SK-N-SH (cell line): ENCODE measurements at regions of chr4 and their contacts with region 1.

Region 1: DNA sequence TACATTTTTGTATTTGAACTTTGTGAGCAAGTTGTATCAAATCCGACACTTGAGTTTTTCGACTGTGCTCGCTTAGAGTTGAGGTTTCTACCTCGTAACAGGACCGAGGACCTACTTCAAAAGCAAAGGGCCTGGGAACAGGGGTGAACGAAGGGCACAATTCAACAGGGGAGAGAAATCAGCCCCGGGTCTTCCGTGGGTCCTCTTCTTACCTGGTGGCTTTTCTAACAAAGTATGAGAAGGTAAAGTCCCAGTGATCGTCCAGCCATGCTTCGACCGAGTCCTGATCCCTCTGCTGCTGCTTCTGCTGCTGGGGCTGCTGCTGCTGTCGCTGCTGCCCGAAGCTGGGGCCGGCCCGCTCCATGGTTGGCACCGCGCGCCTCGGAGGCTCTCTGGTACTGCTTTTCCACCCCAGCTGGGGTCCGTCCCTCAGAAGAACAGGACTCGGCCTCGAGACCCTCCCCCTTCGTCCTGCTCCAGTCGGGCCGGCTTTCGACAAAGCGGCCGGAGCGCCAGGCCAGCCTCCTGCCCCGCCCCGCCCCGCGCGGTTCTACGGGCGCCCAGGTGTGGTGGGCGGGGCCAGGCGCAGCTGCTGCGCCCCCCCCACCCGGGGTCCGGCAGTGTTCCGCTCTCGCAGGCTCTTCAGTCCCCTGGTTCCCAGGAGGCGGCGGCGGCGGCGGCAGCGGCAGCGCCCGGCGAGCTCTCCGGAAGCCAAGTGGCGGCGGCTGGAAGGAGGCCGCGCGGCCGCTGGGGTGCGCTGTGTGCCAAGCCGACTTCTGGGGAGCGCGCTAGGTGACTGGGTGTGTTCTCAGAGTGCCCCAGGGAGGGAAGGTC is at the start of gene PDE5A:
- DNase-seq: peak; percentile 85
- H3K4me3 ChIP-seq: peak within 1 kb of the TSS; percentile 82 to 89
- H3K27ac ChIP-seq: peak within 1 kb of the TSS in 1 of 2 experiments; percentile 50; a peak in 3 of 4 replicates
- H3K4me1 ChIP-seq: peaks cover 5 to 7% of the 10 kb centered on the region in 2 experiments; a peak in 3 of 4 replicates
- H3K27me3 ChIP-seq: no peaks in the 10 kb centered on the region
- CTCF ChIP-seq: peak; percentile 88
- EP300 ChIP-seq: no peak
- RAD21 ChIP-seq: peak; percentile 81
- polyA plus RNA-seq, gene PDE5A: 6.4 and 10.1 TPM in 2 replicates

Region 2: GRCh38 chr4:119559044-119559647 is 69.4 kb before region 1 on chr4:
- CTCF ChIA-PET with region 1: interaction called, 68 read pairs
- POLR2A ChIA-PET with region 1: no interaction called
- DNase-seq: peak; percentile 45
- H3K4me3 ChIP-seq: peak overlapping the region in 1 of 2 experiments; percentile 3; a peak in 1 of 4 replicates
- H3K27ac ChIP-seq: no peak overlapping the region
- H3K4me1 ChIP-seq: no peaks in the 10 kb centered on the region; a peak in 1 of 4 replicates
- H3K27me3 ChIP-seq: no peaks in the 10 kb centered on the region
- CTCF ChIP-seq: peak; percentile 75
- EP300 ChIP-seq: no peak
- RAD21 ChIP-seq: peak; percentile 78

Region 3: GRCh38 chr4:119597377-119597776 is 31.1 kb before region 1 on chr4:
- CTCF ChIA-PET with region 1: interaction called, 13 read pairs
- POLR2A ChIA-PET with region 1: no interaction called
- DNase-seq: no peak
- H3K4me3 ChIP-seq: no peak overlapping the region
- H3K27ac ChIP-seq: no peak overlapping the region
- H3K4me1 ChIP-seq: no peaks in the 10 kb centered on the region
- H3K27me3 ChIP-seq: no peaks in the 10 kb centered on the region
- CTCF ChIP-seq: no peak
- EP300 ChIP-seq: no peak
- RAD21 ChIP-seq: no peak

Region 4: GRCh38 chr4:119657111-119657611 is 28.6 kb after region 1 on chr4:
- CTCF ChIA-PET with region 1: interaction called, 34 read pairs
- POLR2A ChIA-PET with region 1: no interaction called
- DNase-seq: no peak
- H3K4me3 ChIP-seq: no peak overlapping the region
- H3K27ac ChIP-seq: no peak overlapping the region
- H3K4me1 ChIP-seq: peaks cover 0 to 9% of the 10 kb centered on the region in 2 experiments; a peak in 2 of 4 replicates
- H3K27me3 ChIP-seq: no peaks in the 10 kb centered on the region
- CTCF ChIP-seq: no peak
- EP300 ChIP-seq: no peak
- RAD21 ChIP-seq: no peak

Region 5: GRCh38 chr4:119897260-119897659 is 268.7 kb after region 1 on chr4:
- CTCF ChIA-PET with region 1: interaction called, 11 read pairs
- POLR2A ChIA-PET with region 1: no interaction called
- DNase-seq: peak; percentile 31
- H3K4me3 ChIP-seq: no peak overlapping the region
- H3K27ac ChIP-seq: peak overlapping the region in 1 of 2 experiments; percentile 91; a peak in 2 of 4 replicates
- H3K4me1 ChIP-seq: peaks cover 0 to 10% of the 10 kb centered on the region in 2 experiments; a peak in 2 of 4 replicates
- H3K27me3 ChIP-seq: no peaks in the 10 kb centered on the region
- CTCF ChIP-seq: no peak
- EP300 ChIP-seq: peak in 1 of 2 experiments; percentile 75; a peak in 1 of 4 replicates
- RAD21 ChIP-seq: no peak; the same call in 1 of the 2 replicates

Region 6: DNA sequence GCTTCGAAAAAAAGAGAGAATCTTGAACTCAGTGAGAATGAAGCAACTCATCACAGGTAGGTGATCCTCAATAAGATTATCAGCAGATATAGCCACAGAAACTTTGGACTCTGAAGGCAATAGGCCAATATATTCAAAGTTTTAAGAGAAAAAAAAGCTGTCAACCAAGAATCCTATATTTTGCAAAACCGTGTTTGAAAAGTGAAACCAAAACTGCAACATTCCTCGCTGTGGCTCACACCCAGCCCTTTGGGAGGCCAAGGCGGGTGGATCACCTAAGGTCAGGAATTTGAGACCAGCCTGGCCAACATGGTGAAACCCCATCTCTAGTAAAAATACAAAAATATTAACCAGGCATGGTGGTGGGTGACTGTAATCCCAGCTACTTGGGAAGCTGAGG is 415.3 kb after region 1 on chr4:
- CTCF ChIA-PET with region 1: interaction called, 192 read pairs
- POLR2A ChIA-PET with region 1: no interaction called
- DNase-seq: no peak
- H3K4me3 ChIP-seq: no peak overlapping the region
- H3K27ac ChIP-seq: no peak overlapping the region
- H3K4me1 ChIP-seq: no peaks in the 10 kb centered on the region
- H3K27me3 ChIP-seq: no peaks in the 10 kb centered on the region
- CTCF ChIP-seq: no peak
- EP300 ChIP-seq: no peak
- RAD21 ChIP-seq: no peak

Region 7: GRCh38 chr4:120066517-120067340 is 438.2 kb after region 1 on chr4 and contains the start of gene MAD2L1:
- CTCF ChIA-PET with region 1: interaction called, 27 read pairs
- POLR2A ChIA-PET with region 1: no interaction called
- DNase-seq: peak; percentile 93
- H3K4me3 ChIP-seq: peak within 1 kb of the TSS; percentile 86 to 89
- H3K27ac ChIP-seq: peak within 1 kb of the TSS; percentile 97 to 98
- H3K4me1 ChIP-seq: peaks cover 9 to 31% of the 10 kb centered on the region in 2 experiments; a peak in 3 of 4 replicates
- H3K27me3 ChIP-seq: no peaks in the 10 kb centered on the region
- CTCF ChIP-seq: no peak
- EP300 ChIP-seq: no peak
- RAD21 ChIP-seq: no peak
- polyA plus RNA-seq, gene MAD2L1: 19.4 and 37.4 TPM in 2 replicates